ENCODE measurements at regions of chr14 and their contacts with region 1.

Region 1: GRCh38 chr14:21822109-21822508 is 148.5 kb upstream of the OR4E1 start:
- DNase-seq: no peak
- H3K4me3 ChIP-seq: no peak overlapping the region
- H3K27ac ChIP-seq: no peak overlapping the region
- H3K4me1 ChIP-seq: peaks cover 7% of the 10 kb centered on the region; the same call in 1 of the 2 replicates
- H3K27me3 ChIP-seq: no peaks in the 10 kb centered on the region
- CTCF ChIP-seq: no peak

Region 2: GRCh38 chr14:21039585-21040369 is 782.3 kb before region 1 on chr14:
- CTCF ChIA-PET with region 1: no interaction called
- POLR2A ChIA-PET with region 1: no interaction called
- intact Hi-C with region 1: no loop called
- DNase-seq: peak; percentile 22 to 43
- H3K4me3 ChIP-seq: no peak overlapping the region
- H3K27ac ChIP-seq: no peak overlapping the region
- H3K4me1 ChIP-seq: peaks cover 15% of the 10 kb centered on the region
- H3K27me3 ChIP-seq: no peaks in the 10 kb centered on the region
- CTCF ChIP-seq: peak; percentile 57; the same call in 1 of the 2 replicates

Region 3: DNA sequence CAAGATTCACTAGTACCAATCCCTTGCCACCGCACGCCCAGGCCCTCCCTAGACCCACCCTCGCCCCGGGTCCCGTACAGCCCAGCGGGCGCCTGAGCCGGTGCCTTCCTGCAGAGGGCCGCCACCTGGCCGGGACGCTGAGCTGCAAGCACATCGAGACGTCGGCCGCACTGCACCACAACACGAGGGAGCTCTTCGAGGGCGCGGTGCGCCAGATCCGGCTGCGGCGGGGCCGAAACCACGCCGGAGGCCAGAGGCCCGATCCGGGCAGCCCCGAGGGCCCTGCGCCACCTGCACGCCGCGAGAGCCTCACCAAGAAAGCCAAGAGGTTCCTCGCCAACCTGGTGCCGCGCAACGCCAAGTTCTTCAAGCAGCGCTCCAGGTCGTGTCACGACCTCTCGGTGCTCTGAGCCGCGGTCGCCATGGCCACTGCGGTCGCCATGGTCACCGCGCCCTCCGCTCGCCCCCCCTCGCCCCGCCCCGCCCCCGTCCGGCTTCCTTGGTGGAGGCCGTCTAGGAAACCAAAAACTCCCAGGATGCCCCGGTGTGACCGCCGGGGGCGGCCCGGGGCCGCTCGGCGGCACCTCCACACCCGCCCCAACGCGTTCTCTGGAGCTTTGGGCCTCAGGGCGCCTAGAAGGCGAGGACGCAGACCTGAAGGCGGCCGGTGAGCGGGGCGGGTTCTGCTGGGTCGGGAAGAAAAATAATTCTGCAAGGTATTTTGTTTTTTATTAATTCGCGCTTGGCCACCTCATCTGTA is 1064.6 kb after region 1 on chr14:
- CTCF ChIA-PET with region 1: no interaction called
- POLR2A ChIA-PET with region 1: interaction called, 11 read pairs
- intact Hi-C with region 1: no loop called
- DNase-seq: peak; percentile 63 to 66
- H3K4me3 ChIP-seq: peak overlapping the region; percentile 68
- H3K27ac ChIP-seq: peak overlapping the region; percentile 61
- H3K4me1 ChIP-seq: peaks cover 7% of the 10 kb centered on the region; the same call in 1 of the 2 replicates
- H3K27me3 ChIP-seq: no peaks in the 10 kb centered on the region
- CTCF ChIP-seq: no peak; the same call in 1 of the 2 replicates

Measured in PC-9 (cell line).